ENCODE measurements at regions of chr17 and their contacts with region 1.

Region 1: GRCh38 chr17:82153745-82154375 is 55.8 kb upstream of the FASN start:
- DNase-seq: peak; percentile 74 to 88 (median 82)
- H3K4me3 ChIP-seq: no peak overlapping the region
- H3K27ac ChIP-seq: no peak overlapping the region
- H3K4me1 ChIP-seq: no peaks in the 10 kb centered on the region
- H3K27me3 ChIP-seq: no peaks in the 10 kb centered on the region
- CTCF ChIP-seq: peak; percentile 86 to 97 (median 94)
- POLR2A ChIP-seq: no peak

Region 2: DNA sequence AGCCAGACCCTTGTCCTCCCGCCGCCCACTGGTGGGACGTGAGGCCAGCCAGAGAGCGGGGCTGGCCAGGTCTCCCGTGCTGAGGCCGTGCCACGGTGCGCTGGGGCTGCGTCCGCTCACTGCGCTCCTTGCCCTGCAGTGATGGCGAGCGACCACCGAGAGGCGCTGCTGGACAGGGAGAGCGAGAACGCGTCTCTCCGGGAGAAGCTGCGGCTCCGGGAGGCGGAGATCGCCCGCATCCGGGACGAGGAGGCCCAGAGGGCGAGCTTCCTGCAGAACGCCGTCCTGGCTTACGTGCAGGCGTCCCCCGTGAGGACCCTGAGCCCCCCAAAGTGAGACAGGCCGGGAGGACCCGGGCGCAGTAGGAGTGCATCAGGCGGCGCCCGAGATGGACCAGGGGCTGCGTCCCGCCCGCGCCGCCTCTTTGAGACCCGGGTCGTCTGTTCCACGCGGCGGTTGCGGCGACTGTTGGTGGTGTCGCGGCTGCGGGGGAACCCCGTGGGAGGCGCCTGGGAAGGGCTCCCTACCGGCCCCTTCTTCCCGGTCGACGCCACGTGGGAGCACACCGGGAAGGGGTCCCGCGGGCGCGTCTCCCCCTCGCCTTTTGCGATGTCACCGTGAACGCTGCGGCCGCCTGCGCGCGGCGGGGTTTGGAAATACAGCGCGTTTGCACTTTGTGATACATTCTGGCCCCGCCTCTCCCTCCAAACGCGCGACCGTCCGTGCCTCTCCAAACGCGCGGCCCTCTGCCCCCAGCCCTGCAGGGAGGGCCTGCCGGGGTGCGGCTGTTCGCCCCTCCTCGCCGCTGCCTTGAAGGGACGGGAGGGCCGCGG is 123.2 kb before region 1 on chr17:
- intact Hi-C with region 1: loop called (anchors 2 to 5 kb)
- DNase-seq: peak; percentile 85 to 91 (median 89)
- H3K4me3 ChIP-seq: peak overlapping the region in 1 of 4 donors; percentile 53
- H3K27ac ChIP-seq: peak overlapping the region in 3 of 5 donors; percentile 22 to 77 (median 61)
- H3K4me1 ChIP-seq: peaks cover under 1 to 10% of the 10 kb centered on the region in 2 donors
- H3K27me3 ChIP-seq: no peaks in the 10 kb centered on the region
- CTCF ChIP-seq: peak; percentile 87 to 99 (median 96)
- POLR2A ChIP-seq: no peak

Region 3: DNA sequence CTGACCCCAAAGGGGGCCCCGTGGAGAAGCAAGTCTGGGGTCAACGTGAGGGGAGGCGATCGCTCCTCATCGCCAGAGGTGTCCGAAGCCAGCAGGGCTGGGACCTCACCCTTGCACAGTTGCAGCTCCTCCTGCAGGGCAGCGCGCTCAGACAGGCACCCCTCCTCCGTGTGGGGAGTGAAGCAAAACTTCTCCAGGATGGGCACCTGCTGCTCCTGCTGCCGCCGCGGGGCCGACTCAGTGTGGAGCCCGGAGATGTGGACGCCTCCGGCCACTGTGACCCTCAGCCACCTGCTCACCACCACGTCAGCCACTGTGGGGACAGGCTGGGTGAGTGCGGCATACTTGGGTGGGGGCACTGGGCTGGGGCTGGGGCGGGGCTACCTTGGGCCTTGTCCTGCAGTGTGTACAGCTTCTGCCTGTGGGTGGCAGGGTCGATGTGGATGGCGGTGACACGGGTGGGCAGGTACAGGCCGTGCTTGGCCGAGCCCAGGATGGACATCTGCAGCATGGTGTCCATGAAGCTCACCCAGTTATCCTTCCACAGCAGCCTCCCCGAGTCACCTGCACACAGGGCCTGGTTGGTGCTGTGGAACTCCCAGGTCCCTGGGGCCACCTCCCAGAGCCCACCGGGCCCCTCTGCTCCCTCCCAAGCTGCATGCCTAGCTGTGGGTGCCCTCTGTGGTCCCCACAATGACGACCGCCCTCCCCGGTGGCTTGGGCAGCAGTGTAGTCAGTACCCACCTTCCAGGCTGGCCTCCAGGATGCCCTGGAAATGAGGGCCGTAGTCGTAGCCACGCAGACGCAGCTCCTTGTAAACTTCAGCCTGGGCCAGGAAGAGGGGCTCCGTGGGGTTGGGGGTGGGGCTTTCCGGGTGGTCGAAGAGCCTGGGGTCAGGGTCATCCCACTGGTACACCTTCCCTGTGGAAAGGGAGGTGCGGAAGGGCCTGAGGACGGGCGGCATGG is 66.6 kb before region 1 on chr17:
- intact Hi-C with region 1: no loop called
- DNase-seq: no peak
- H3K4me3 ChIP-seq: no peak overlapping the region
- H3K27ac ChIP-seq: no peak overlapping the region
- H3K4me1 ChIP-seq: no peaks in the 10 kb centered on the region
- H3K27me3 ChIP-seq: no peaks in the 10 kb centered on the region
- CTCF ChIP-seq: no peak
- POLR2A ChIP-seq: no peak

Region 4: DNA sequence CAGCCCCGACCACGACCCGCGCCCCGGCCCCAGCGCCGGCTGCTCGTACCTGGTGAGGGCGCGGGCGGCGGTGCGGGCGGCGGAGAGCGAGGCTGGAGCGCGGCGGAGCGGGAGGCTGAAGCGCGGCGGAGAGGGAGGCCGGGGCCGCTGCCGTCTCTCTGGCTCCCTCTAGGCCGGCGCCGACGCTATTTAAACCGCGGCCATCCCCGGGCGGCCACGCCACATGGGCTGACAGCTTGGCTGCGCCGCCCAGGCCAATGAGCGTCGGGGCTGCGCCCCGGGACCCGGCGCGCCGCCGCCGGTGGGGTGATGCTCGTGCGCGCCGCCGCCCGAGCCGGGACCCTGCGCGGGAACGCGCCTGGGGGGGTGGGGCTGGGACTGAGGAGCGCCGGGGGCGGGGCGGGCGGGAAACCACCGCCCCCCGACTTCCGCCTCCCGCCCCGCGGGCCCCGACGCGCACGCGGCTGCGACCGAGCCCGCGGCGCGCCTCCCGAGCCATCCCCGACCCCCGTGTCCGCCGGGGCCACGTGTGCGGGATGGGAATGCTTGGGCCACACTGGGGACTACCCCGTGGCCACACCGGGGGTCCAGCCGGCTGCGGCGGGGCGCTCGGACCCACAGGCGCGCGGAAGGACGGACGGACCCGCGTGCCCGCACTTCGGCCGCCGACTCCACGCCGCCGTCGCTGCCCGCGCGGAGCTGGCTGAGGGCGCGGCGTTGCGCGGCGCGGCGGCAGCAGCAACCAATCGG is 55.6 kb before region 1 on chr17 and contains the start of gene FASN:
- intact Hi-C with region 1: loop called in 1 of 2 experiments (anchors 5 kb)
- DNase-seq: peak; percentile 90 to 95 (median 93)
- H3K4me3 ChIP-seq: peak within 1 kb of the TSS; percentile 40 to 86 (median 66)
- H3K27ac ChIP-seq: peak within 1 kb of the TSS; percentile 86 to 100 (median 94)
- H3K4me1 ChIP-seq: peaks cover 22 to 35% of the 10 kb centered on the region in 2 donors
- H3K27me3 ChIP-seq: no peaks in the 10 kb centered on the region
- CTCF ChIP-seq: peak in 3 of 6 experiments; percentile 28 to 53 (median 45)
- POLR2A ChIP-seq: peak; percentile 99
- total RNA-seq, gene FASN: 46.1 to 276 (median 81.8) TPM